IMR-90 (cell line): ENCODE measurements at regions of chr21 and their contacts with region 1.

Region 1: DNA sequence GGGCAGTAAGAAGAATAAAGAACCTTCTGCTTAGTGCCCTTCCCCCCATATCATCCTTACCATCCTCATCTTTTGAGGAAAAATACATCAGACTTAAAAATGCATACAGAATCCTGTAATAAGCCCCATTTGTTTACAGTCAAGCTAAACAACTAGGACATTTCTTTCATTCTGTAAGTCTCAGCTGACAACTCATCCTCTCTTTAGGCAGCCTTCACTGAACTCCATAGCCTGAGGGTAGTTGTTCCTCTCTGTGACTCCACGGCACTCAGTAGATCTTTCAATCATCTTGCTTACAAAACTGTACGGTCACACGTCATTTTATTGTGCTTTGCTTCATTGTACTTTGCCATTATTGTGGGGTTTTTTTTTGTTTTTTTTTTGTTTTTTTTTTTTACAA is 82.5 kb downstream of the NRIP1 start:
- DNase-seq: peak; percentile 57
- ATAC-seq: peak; percentile 89
- H3K4me3 ChIP-seq: no peak overlapping the region
- H3K27ac ChIP-seq: no peak overlapping the region
- H3K4me1 ChIP-seq: peaks cover 5% of the 10 kb centered on the region
- H3K27me3 ChIP-seq: no peaks in the 10 kb centered on the region
- CTCF ChIP-seq: no peak
- POLR2A ChIP-seq: no peak
- RAD21 ChIP-seq: no peak

Region 2: DNA sequence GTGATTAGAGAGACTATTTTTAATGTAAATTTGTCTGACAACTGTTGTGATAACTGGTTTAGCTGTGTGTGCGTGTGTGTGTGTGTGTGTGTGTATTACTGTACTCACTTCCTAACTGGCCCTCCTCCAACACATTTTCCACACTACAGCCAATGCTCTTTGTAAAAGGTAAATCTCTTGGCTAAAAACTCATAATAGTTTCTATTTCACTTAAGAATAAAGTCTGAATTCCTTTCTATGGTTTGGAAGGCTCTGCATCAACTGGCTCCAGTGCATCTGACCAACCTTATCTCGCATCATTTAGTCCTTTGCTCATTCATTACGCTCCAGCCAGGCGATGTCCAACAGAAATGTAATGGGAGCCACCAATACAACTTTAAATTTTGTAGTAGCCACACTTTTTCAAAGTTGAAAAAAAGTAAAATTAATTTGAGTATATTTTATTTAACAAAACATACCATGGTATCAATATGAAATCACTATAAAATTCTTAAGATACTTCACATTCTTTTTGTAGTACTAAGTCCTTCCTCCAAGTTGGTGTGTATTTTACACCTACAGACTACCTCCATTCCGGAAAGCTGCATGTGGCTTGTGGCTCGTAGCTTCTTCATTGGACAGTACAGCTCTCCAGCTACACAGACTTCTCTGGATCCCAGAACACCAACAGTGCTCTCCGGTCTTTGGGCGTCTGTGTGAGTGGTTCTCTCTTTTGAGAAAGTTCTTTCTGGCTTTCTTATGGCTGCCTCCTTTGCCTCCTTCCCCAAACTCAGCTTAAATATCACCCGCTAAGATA is 13.6 kb after region 1 on chr21:
- CTCF ChIA-PET with region 1: no interaction called
- POLR2A ChIA-PET with region 1: interaction called, 13 read pairs
- dilution Hi-C with region 1: no loop called
- in situ Hi-C with region 1: no loop called
- intact Hi-C with region 1: no loop called
- DNase-seq: peak; percentile 63
- ATAC-seq: peak; percentile 28; the same call in 1 of the 2 replicates
- H3K4me3 ChIP-seq: no peak overlapping the region
- H3K27ac ChIP-seq: peak overlapping the region; percentile 50
- H3K4me1 ChIP-seq: peaks cover 17% of the 10 kb centered on the region
- H3K27me3 ChIP-seq: no peaks in the 10 kb centered on the region
- CTCF ChIP-seq: no peak
- POLR2A ChIP-seq: no peak
- RAD21 ChIP-seq: no peak